Tibial artery (tissue), 4 donors: ENCODE measurements at regions of chr19 and their contacts with region 1.

Region 1: DNA sequence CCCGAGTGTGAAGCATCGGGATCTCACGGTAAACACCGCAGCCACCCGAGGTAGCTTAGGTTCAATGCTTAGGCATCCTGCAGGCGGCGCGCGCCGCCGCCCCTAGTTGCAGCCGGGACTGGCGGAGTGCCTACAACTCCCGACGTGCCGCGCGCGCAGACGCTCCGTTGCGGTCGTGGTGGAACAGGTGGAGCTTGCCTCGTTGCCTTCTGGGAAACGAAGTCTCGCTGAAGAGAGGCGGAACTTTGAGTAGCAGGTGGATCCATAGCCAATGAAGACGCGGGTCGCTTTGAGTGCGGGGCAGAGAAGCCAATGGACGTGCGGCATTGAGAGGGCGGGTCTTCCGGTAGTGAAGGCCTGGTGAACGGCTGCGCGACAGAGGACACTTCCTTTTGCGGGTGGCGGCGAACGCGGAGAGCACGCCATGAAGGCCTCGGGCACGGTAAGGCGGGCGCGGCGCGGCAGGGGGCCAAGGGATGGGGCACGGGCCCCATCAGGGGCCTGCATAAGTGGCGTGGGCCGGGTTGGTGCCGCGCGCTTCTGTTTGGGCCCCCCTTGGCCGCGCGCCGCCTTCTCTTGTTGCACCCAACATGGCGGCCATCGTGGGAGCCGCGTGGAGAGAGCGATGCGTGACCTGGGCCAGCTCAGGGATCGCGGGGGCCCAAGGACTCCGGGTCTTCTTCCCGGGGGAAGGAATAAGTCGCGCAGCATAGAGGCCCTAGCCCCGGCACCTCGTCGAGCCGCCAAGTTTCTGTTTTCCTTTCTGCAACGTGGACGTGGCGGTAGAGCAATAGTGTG is at the start of gene RPL18A:
- DNase-seq: peak; percentile 99
- H3K4me3 ChIP-seq: peak within 1 kb of the TSS; percentile 77 to 85
- H3K27ac ChIP-seq: peak within 1 kb of the TSS; percentile 83 to 87
- H3K4me1 ChIP-seq: peaks cover 5 to 30% (median 20%) of the 10 kb centered on the region in 4 donors
- H3K27me3 ChIP-seq: no peaks in the 10 kb centered on the region
- CTCF ChIP-seq: peak; percentile 74

Region 2: DNA sequence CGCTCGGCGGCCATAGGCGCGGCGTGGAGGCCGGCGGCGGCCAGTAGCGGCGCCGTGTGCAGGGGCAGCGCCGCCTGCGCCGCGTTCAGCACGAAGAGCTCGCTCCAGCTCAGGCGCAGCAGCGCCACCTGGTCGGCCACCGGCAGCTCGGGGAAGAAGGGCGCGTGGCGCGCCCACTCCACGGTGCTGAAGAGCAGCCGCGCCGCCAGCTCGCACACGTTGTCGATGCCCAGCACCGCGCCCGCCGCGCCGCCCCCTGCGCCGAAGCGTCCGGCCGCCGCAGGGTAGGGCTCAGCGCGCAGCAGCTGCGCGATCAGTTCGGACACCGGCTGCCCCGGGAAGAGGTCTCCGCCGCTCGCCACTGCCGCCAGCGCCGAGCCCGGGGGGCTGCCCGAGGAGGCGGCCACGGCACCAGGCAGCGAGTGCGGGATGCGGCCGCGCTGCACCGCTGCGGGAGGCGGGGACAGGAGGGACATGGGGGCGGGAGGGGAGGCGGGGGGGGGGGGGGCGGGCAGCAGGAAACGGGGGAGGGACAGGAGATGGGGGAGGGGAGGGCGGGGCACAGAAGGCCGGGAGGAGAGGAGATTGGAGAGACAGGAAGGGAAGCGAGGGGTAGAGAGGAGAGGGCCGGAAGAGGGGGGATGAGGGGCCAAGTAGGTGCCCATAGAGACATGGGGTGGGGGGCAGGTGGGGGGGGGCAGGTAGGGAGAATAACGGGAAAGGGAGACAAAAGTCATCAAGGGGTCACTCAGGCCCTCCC is 623.9 kb before region 1 on chr19:
- intact Hi-C with region 1: loop called (anchors 10 kb)
- DNase-seq: peak; percentile 60 to 83
- H3K4me3 ChIP-seq: peak overlapping the region; percentile 48 to 70
- H3K27ac ChIP-seq: peak overlapping the region; percentile 63 to 82
- H3K4me1 ChIP-seq: peaks cover 0 to 28% (median 21%) of the 10 kb centered on the region in 4 donors
- H3K27me3 ChIP-seq: no peaks in the 10 kb centered on the region
- CTCF ChIP-seq: peak; percentile 35 to 46

Region 3: GRCh38 chr19:17605761-17606745 is 253.7 kb before region 1 on chr19:
- intact Hi-C with region 1: loop called (anchors 10 kb)
- DNase-seq: peak; percentile 72 to 83
- H3K4me3 ChIP-seq: peak overlapping the region; percentile 32 to 44
- H3K27ac ChIP-seq: no peak overlapping the region
- H3K4me1 ChIP-seq: peaks cover 9 to 14% (median 11%) of the 10 kb centered on the region in 4 donors
- H3K27me3 ChIP-seq: peaks cover 0 to 66% of the 10 kb centered on the region in 2 donors
- CTCF ChIP-seq: peak; percentile 71 to 80

Region 4: GRCh38 chr19:17932485-17933338 is 73.0 kb after region 1 on chr19 and contains the start of gene CCDC124:
- intact Hi-C with region 1: loop called (anchors 5 kb)
- DNase-seq: peak; percentile 85 to 92
- H3K4me3 ChIP-seq: peak within 1 kb of the TSS; percentile 64 to 88
- H3K27ac ChIP-seq: peak within 1 kb of the TSS; percentile 69 to 79
- H3K4me1 ChIP-seq: peaks cover 0 to 23% (median 18%) of the 10 kb centered on the region in 4 donors
- H3K27me3 ChIP-seq: no peaks in the 10 kb centered on the region
- CTCF ChIP-seq: peak; percentile 60 to 63

Region 5: DNA sequence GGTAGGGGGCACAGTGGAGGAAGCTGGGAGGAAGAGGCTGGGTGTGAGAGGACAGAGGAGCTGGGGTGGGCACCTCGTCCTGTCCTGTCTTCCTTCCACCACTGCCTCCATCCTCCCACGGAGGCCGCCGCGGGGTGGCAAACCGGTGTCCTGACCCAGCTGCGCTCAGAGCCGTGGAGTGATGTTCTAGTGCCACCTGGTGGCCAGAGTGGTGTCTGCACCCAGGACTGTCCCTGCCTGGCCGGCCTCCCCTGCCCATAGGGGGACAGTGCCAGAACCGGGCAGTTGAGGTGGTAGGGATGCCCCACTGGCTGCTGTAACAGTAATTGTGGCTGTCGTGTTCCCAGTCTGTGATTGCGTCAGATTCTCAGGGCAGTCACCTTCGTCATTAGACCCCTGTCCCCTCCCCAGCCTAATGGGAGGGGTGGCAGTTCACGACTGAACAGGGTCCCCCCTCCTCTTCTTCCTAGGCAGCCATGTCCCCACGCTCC is 137.1 kb after region 1 on chr19:
- intact Hi-C with region 1: loop called (anchors 5 kb)
- DNase-seq: peak; percentile 84 to 91
- H3K4me3 ChIP-seq: no peak overlapping the region
- H3K27ac ChIP-seq: no peak overlapping the region
- H3K4me1 ChIP-seq: peaks cover 0 to 19% (median 10%) of the 10 kb centered on the region in 4 donors
- H3K27me3 ChIP-seq: peaks cover 0 to 28% of the 10 kb centered on the region in 2 donors
- CTCF ChIP-seq: peak; percentile 97 to 98